ENCODE measurements at regions of chr1 and their contacts with region 1.

Region 1: GRCh38 chr1:44377925-44378784 is 23.1 kb upstream of the ERI3 start:
- DNase-seq: peak; percentile 57
- H3K4me3 ChIP-seq: no peak overlapping the region
- H3K27ac ChIP-seq: no peak overlapping the region
- H3K4me1 ChIP-seq: no peaks in the 10 kb centered on the region
- H3K27me3 ChIP-seq: no peaks in the 10 kb centered on the region
- CTCF ChIP-seq: peak; percentile 29 to 44 (median 43)
- POLR2A ChIP-seq: no peak

Region 2: DNA sequence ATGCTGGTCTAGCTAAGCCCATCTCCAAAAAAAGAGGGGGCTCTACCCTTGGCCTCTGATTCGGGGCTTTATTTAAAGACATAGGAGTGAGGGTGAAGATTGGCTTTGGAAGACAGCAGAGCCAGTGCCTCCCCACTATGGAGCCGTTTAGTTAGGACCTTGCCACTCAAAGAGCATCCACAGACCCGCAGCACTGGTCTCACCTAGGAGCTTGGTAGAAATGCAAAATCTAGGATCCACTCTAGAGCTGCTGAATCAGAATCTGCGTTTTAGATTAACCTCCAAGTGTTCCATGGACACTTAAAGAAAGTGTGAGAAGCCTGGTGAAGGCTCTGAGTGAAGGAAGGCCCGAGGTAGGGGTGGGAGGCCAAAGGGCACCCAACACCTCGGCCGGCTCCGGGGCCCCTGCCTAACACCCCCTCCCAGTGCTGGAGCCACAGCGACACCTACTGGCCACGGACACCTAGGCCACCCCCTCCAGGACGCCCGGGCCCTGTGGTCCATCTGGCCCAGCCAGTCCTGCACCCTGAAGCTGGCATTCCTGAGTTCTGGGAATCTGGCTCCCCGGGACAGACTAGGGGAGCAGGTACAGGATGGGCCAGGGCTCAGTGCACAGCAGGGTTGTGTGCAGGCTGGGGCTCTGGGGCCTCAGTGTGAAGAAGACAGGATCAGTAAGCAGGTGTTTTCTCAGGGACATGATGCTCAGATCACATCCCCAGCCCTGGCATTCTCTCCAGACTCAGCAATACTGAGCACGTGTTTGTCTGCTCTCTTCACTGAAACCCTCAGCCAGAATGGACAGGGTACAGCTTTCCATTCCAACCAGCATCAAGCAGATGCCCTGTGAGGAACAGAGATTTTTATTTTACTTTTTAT is 217.0 kb after region 1 on chr1:
- intact Hi-C with region 1: loop called (anchors 10 kb)
- DNase-seq: peak; percentile 77
- H3K4me3 ChIP-seq: no peak overlapping the region
- H3K27ac ChIP-seq: no peak overlapping the region
- H3K4me1 ChIP-seq: no peaks in the 10 kb centered on the region
- H3K27me3 ChIP-seq: no peaks in the 10 kb centered on the region
- CTCF ChIP-seq: peak; percentile 72 to 87 (median 74)
- POLR2A ChIP-seq: no peak